Prostate gland (tissue), 2 donors: ENCODE measurements at regions of chr17 and their contacts with region 1.

Region 1: DNA sequence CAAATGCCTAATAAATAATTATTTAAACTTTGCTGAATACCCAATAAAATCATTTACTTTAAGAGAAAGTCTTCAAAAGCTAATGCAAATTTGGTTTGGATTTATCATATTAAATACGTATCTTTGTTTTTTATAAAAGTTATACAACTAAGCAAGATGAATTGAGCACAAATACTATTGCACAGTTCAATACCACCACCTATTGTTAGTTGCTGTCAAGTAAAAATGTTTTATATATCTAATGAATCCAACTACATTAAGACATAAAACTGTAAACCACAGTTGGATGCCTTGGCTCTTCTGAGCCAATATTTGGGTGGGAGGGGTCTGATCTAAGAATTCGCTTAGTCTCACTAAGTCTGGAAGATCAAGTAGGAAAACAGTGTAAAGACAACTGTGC is 7.7 kb downstream of the FBXL20 start:
- DNase-seq: no peak
- H3K4me3 ChIP-seq: no peak overlapping the region
- H3K27ac ChIP-seq: no peak overlapping the region
- H3K4me1 ChIP-seq: no peaks in the 10 kb centered on the region
- H3K27me3 ChIP-seq: no peaks in the 10 kb centered on the region
- CTCF ChIP-seq: no peak
- POLR2A ChIP-seq: no peak

Region 2: GRCh38 chr17:39277110-39277509 is 116.6 kb before region 1 on chr17:
- intact Hi-C with region 1: loop called (anchors 5 kb)
- DNase-seq: no peak
- H3K4me3 ChIP-seq: no peak overlapping the region
- H3K27ac ChIP-seq: no peak overlapping the region
- H3K4me1 ChIP-seq: peaks cover 6% of the 10 kb centered on the region
- H3K27me3 ChIP-seq: no peaks in the 10 kb centered on the region
- CTCF ChIP-seq: no peak
- POLR2A ChIP-seq: no peak

Region 3: DNA sequence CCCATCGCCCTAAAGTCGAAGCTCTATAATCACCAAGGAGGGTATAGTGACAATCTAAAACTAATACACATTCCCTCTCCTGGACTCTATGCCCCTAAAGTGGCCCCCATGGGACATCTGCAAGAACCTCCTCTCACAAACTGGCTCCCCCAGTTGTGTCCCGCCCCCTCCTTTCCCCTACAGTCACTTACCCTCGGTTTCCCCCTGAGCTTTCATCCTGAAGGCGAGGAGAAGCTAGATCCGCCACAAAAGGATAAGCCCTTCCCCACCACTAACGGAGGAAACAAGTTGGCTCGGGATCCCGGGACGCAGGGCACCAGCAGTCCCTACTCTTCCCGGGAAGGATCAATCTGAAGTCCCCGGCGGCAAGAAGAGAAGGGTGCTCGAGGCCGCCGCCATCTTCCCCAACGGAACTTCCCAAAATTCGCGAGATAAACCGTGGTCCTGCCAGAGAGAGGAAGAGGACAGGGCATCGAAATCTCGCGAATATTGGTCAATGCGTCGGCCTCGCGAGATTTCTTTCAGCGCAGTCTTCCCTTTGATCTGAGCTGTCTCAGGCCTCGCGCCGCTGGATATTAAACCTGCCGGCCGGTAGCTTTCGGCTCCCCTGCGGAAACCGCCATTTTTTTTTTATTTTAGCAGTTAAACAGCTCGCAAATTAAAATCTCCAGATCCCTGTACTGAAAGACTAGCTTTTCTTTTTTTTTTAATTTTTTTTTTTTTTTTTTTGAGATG is 57.3 kb after region 1 on chr17 and contains the start of gene MED1:
- intact Hi-C with region 1: no loop called
- DNase-seq: peak; percentile 93
- H3K4me3 ChIP-seq: peak within 1 kb of the TSS; percentile 42 to 67
- H3K27ac ChIP-seq: peak within 1 kb of the TSS; percentile 62 to 72
- H3K4me1 ChIP-seq: no peaks in the 10 kb centered on the region
- H3K27me3 ChIP-seq: no peaks in the 10 kb centered on the region
- CTCF ChIP-seq: peak in 1 of 4 experiments; percentile 10
- POLR2A ChIP-seq: peak; percentile 49
- total RNA-seq, gene MED1: 22.9 to 39.7 TPM

Region 4: DNA sequence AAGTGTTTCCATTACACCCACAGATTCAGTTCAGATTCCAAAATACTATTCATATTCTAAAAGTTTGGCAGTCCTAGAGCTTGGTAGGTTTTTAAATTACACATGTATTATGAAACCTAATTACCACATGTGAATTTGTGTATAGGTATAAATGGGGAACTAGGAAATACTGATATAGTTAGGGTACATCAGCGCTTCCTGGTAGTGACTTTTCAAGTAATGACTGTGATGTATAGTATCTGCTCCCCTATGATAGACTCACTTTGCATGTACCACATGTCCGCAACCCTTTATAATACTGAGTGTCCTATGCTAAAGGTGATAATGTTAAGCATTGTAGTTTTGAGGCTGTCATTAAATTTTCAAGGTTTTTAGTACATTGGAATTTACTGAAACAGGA is 90.4 kb after region 1 on chr17:
- intact Hi-C with region 1: no loop called
- DNase-seq: no peak
- H3K4me3 ChIP-seq: no peak overlapping the region
- H3K27ac ChIP-seq: no peak overlapping the region
- H3K4me1 ChIP-seq: no peaks in the 10 kb centered on the region
- H3K27me3 ChIP-seq: no peaks in the 10 kb centered on the region
- CTCF ChIP-seq: no peak
- POLR2A ChIP-seq: no peak